IMR-90 (cell line): ENCODE measurements at regions of chr12 and their contacts with region 1.

Region 1: GRCh38 chr12:48795480-48796455 is 6.9 kb upstream of the ADCY6 start:
- DNase-seq: peak; percentile 75
- ATAC-seq: peak; percentile 97
- H3K4me3 ChIP-seq: no peak overlapping the region
- H3K27ac ChIP-seq: no peak overlapping the region
- H3K4me1 ChIP-seq: no peaks in the 10 kb centered on the region
- H3K27me3 ChIP-seq: no peaks in the 10 kb centered on the region
- CTCF ChIP-seq: peak; percentile 97
- POLR2A ChIP-seq: peak; percentile 35; the same call in 1 of the 2 replicates
- RAD21 ChIP-seq: peak; percentile 94

Region 2: GRCh38 chr12:48618541-48618940 is 177.2 kb before region 1 on chr12:
- CTCF ChIA-PET with region 1: interaction called, 3 read pairs
- POLR2A ChIA-PET with region 1: no interaction called
- dilution Hi-C with region 1: no loop called
- in situ Hi-C with region 1: no loop called
- intact Hi-C with region 1: loop called (anchors 5 kb)
- DNase-seq: peak; percentile 72
- ATAC-seq: peak; percentile 99
- H3K4me3 ChIP-seq: no peak overlapping the region
- H3K27ac ChIP-seq: no peak overlapping the region
- H3K4me1 ChIP-seq: no peaks in the 10 kb centered on the region
- H3K27me3 ChIP-seq: peaks cover 2% of the 10 kb centered on the region
- CTCF ChIP-seq: peak; percentile 90
- POLR2A ChIP-seq: no peak
- RAD21 ChIP-seq: peak; percentile 91

Region 3: DNA sequence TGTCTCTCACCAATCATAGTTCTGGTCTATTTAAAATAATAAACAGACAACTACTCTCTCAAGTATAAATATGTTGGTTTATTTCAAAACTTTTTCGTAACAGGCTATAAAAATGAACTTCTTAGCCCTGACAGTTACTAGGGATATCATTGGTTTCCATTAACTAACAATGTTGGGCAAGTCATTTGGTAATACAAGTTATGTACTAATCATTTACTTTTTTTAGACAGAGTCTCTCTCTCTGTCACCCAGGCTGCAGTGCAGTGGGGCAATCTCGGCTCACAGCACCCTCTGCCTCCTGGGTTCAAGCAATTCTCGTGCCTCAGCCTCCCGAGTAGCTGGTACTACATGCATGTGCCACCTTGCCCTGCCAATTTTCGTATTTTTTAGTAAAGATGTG is 99.1 kb before region 1 on chr12:
- CTCF ChIA-PET with region 1: no interaction called
- POLR2A ChIA-PET with region 1: no interaction called
- dilution Hi-C with region 1: no loop called
- in situ Hi-C with region 1: no loop called
- intact Hi-C with region 1: no loop called
- DNase-seq: no peak
- ATAC-seq: no peak
- H3K4me3 ChIP-seq: no peak overlapping the region
- H3K27ac ChIP-seq: no peak overlapping the region
- H3K4me1 ChIP-seq: 0 out of 2 replicates have a peak, but pooled peaks cover 2% of the 10 kb centered on the region
- H3K27me3 ChIP-seq: no peaks in the 10 kb centered on the region
- CTCF ChIP-seq: no peak
- POLR2A ChIP-seq: no peak
- RAD21 ChIP-seq: no peak

Region 4: DNA sequence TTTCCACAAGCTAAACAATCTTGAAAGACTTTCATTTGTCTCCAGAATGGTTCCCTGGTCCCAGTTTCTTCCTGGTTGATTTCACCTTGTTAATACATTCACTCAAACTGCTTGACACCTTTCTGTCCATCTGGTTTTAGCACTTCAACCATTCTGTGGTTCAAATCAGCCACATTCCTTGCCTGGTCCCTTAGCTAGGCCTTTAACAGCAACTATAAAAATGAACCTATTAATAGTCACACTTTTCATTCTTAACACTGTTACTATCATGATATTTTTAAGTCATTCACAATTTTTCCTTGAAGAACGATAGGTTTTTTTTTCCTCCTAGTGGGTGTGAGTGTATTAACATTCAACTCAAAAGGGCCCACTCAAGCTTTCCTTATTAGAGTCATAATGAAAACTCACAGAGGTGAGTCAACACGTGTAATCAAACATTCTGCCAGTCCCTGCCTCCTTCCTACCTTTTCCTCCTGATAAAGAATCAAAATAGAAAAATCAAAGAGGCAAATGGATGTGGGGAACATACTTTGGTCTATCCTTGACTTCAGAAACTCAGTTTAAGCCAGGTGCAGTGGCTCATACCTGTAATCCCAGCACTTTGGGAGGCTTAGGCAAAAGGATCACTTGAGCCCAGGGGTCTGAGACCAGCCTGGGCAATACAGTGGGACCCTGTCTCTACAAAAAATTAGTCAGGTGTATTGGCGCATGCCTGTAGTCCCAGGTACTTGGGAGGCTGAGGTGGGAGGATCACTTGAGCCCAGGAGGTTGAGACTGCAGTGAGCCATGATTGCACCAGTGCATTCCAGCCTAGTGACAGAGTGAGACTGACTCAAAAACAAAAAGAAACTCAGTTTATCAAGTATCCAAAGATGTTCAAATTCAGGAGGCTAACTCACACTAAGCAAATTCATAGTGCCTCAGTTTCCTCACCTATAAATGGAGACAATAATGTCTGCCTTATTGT is 44.7 kb before region 1 on chr12:
- CTCF ChIA-PET with region 1: interaction called, 9 read pairs
- POLR2A ChIA-PET with region 1: no interaction called
- dilution Hi-C with region 1: no loop called
- in situ Hi-C with region 1: loop called (anchors 5 kb)
- intact Hi-C with region 1: loop called (anchors 1 kb)
- DNase-seq: peak; percentile 44
- ATAC-seq: no peak; the same call in 1 of the 2 replicates
- H3K4me3 ChIP-seq: no peak overlapping the region
- H3K27ac ChIP-seq: no peak overlapping the region
- H3K4me1 ChIP-seq: peaks cover 2% of the 10 kb centered on the region
- H3K27me3 ChIP-seq: peaks cover 4% of the 10 kb centered on the region
- CTCF ChIP-seq: no peak
- POLR2A ChIP-seq: no peak
- RAD21 ChIP-seq: no peak

Region 5: GRCh38 chr12:48765753-48766162 is 30.0 kb before region 1 on chr12:
- CTCF ChIA-PET with region 1: interaction called, 3 read pairs
- POLR2A ChIA-PET with region 1: interaction called, 17 read pairs
- dilution Hi-C with region 1: no loop called
- in situ Hi-C with region 1: no loop called
- intact Hi-C with region 1: no loop called
- DNase-seq: peak; percentile 45
- ATAC-seq: peak; percentile 56
- H3K4me3 ChIP-seq: no peak overlapping the region
- H3K27ac ChIP-seq: no peak overlapping the region
- H3K4me1 ChIP-seq: peaks cover 7% of the 10 kb centered on the region; the same call in 1 of the 2 replicates
- H3K27me3 ChIP-seq: no peaks in the 10 kb centered on the region
- CTCF ChIP-seq: no peak
- POLR2A ChIP-seq: no peak
- RAD21 ChIP-seq: no peak

Region 6: DNA sequence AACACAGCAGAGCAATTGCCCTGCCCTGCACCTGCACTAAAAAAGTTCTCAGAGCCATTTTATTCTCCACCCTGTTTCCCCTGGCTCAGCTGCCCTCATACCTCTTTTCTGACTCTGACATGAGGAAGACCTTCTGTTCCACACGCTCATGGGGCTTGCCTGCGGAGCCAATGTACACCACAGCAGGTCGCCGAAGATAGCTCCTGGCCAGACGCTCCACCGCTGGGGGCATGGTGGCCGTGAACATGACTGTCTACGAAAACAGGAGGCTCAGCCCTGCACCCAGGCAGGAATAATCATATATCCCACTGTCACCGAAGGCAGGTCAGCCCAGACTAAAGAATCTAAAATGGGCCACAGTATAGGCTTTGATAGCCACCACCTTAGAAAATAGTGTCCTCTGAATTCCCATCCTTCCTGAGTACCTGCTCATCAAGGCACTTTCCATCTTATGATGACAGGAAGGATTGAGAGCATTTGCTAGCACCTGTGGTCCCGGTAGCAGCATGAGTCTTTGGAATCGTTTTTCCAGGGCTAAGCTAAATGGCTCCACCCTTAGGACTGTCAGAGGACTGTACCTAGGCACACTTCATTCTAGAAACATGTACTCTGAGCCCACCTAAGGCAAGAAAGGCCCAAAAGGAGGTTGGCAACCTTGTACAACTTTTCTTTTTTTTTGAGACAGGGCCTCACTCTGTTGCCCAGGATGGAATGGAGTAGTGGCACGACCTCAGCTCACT is 36.7 kb after region 1 on chr12:
- CTCF ChIA-PET with region 1: no interaction called
- POLR2A ChIA-PET with region 1: no interaction called
- dilution Hi-C with region 1: no loop called
- in situ Hi-C with region 1: no loop called
- intact Hi-C with region 1: no loop called
- DNase-seq: no peak
- ATAC-seq: no peak
- H3K4me3 ChIP-seq: no peak overlapping the region
- H3K27ac ChIP-seq: no peak overlapping the region
- H3K4me1 ChIP-seq: no peaks in the 10 kb centered on the region
- H3K27me3 ChIP-seq: no peaks in the 10 kb centered on the region
- CTCF ChIP-seq: no peak
- POLR2A ChIP-seq: no peak
- RAD21 ChIP-seq: no peak

Region 7: GRCh38 chr12:49170924-49171323 is 375.2 kb after region 1 on chr12:
- CTCF ChIA-PET with region 1: no interaction called
- POLR2A ChIA-PET with region 1: no interaction called
- dilution Hi-C with region 1: no loop called
- in situ Hi-C with region 1: no loop called
- intact Hi-C with region 1: no loop called
- DNase-seq: no peak
- ATAC-seq: no peak
- H3K4me3 ChIP-seq: no peak overlapping the region
- H3K27ac ChIP-seq: no peak overlapping the region
- H3K4me1 ChIP-seq: no peaks in the 10 kb centered on the region
- H3K27me3 ChIP-seq: peaks cover 2% of the 10 kb centered on the region; the same call in 1 of the 2 replicates
- CTCF ChIP-seq: no peak
- POLR2A ChIP-seq: no peak
- RAD21 ChIP-seq: no peak